Endothelial cell of umbilical vein (primary cell): ENCODE measurements at regions of chr2 and their contacts with region 1.

Region 1: GRCh38 chr2:67733517-67733916 is 329.3 kb downstream of the C1D start:
- DNase-seq: peak; percentile 55
- H3K4me3 ChIP-seq: no peak overlapping the region
- H3K27ac ChIP-seq: no peak overlapping the region
- H3K4me1 ChIP-seq: no peaks in the 10 kb centered on the region
- H3K27me3 ChIP-seq: no peaks in the 10 kb centered on the region
- CTCF ChIP-seq: peak; percentile 32 to 82
- POLR2A ChIP-seq: no peak

Region 2: GRCh38 chr2:67834482-67834881 is 101.0 kb after region 1 on chr2:
- CTCF ChIA-PET with region 1: interaction called, 211 read pairs
- POLR2A ChIA-PET with region 1: no interaction called
- dilution Hi-C with region 1: no loop called
- intact Hi-C with region 1: no loop called
- DNase-seq: no peak
- H3K4me3 ChIP-seq: no peak overlapping the region
- H3K27ac ChIP-seq: no peak overlapping the region
- H3K4me1 ChIP-seq: peaks cover 3% of the 10 kb centered on the region
- H3K27me3 ChIP-seq: no peaks in the 10 kb centered on the region
- CTCF ChIP-seq: no peak
- POLR2A ChIP-seq: no peak

Region 3: DNA sequence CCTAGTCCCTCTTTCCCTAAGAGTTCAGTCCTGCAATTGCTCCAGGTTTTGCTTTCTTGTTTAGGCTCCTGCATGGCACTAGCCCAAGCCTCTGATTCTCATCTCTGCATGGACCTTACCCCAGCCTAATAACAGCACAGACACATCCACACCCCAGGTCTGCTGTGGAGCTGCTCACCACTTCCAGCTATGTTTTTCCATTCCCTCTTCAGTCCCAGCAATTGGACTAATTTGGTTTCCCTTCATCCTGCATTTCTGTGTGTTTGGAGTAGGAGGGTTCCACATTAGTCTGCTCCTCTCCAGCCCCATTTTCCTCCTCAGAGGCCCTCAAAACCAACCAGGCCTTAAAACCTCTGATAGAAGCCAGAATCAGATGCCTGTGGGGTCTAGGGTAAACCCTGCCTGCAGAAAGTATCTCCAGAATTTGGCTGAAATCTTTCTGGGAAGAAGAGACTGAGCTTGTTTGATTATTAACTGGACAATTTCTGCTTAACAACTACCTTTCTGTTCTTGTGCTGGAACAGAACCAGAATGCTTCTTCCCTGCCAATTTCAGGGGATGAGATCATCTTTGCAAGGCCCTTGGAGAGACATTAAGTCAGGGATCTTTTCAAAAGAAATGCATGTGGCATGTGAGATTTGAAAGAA is 1557.6 kb after region 1 on chr2:
- CTCF ChIA-PET with region 1: no interaction called
- POLR2A ChIA-PET with region 1: no interaction called
- dilution Hi-C with region 1: no loop called
- intact Hi-C with region 1: no loop called
- DNase-seq: no peak
- H3K4me3 ChIP-seq: no peak overlapping the region
- H3K27ac ChIP-seq: no peak overlapping the region
- H3K4me1 ChIP-seq: no peaks in the 10 kb centered on the region
- H3K27me3 ChIP-seq: no peaks in the 10 kb centered on the region
- CTCF ChIP-seq: no peak
- POLR2A ChIP-seq: no peak